SK-N-SH (cell line): ENCODE measurements at regions of chr17 and their contacts with region 1.

Region 1: DNA sequence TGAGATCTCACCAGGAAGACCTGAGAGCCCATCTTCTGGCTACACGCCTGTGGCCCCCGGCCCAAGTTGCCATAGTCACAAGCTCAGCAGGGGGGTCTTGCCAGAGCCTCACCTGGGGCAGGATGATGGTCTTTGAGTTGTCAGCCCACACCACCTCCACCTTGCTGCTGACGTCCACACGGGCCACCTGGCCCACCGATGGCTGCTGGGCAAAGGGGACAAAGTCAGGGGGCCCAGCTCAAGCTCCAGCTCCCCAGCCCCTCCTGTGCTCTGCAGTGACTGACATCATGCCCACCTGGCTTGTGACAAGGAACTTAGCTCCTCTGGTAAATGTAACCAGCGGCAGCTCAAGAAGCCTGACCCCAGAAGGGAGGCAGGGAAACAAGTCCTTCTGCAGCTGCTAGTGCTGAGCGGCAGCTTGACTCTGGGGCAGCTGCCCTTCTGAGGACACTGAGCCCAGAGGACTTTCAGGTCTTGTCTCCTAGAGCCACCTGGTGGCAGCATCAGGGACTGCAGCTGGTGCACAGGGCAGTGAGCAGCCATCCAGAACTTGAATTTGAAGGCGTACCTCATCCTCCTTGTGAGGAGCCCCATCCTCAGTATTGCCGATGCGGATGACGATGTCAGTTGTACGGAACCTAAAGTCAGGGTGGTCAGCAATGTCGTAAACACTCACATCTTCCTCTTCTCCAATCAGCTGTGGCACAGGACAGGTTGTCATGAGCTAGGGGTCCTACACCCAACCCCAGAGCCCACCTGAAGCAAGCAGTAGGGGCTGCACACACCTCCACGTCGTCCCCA is 13.5 kb downstream of the SPHK1 start:
- DNase-seq: peak; percentile 92
- H3K4me3 ChIP-seq: no peak overlapping the region; a peak in 1 of 4 replicates
- H3K27ac ChIP-seq: no peak overlapping the region; a peak in 1 of 4 replicates
- H3K4me1 ChIP-seq: peaks cover 0 to 3% of the 10 kb centered on the region in 2 experiments; a peak in 1 of 4 replicates
- H3K27me3 ChIP-seq: no peaks in the 10 kb centered on the region
- CTCF ChIP-seq: peak; percentile 99
- EP300 ChIP-seq: no peak
- RAD21 ChIP-seq: peak; percentile 96

Region 2: GRCh38 chr17:76296186-76296585 is 101.7 kb before region 1 on chr17:
- CTCF ChIA-PET with region 1: interaction called, 348 read pairs
- POLR2A ChIA-PET with region 1: no interaction called
- DNase-seq: no peak
- H3K4me3 ChIP-seq: no peak overlapping the region
- H3K27ac ChIP-seq: no peak overlapping the region
- H3K4me1 ChIP-seq: no peaks in the 10 kb centered on the region
- H3K27me3 ChIP-seq: no peaks in the 10 kb centered on the region
- CTCF ChIP-seq: no peak
- EP300 ChIP-seq: no peak
- RAD21 ChIP-seq: no peak

Region 3: DNA sequence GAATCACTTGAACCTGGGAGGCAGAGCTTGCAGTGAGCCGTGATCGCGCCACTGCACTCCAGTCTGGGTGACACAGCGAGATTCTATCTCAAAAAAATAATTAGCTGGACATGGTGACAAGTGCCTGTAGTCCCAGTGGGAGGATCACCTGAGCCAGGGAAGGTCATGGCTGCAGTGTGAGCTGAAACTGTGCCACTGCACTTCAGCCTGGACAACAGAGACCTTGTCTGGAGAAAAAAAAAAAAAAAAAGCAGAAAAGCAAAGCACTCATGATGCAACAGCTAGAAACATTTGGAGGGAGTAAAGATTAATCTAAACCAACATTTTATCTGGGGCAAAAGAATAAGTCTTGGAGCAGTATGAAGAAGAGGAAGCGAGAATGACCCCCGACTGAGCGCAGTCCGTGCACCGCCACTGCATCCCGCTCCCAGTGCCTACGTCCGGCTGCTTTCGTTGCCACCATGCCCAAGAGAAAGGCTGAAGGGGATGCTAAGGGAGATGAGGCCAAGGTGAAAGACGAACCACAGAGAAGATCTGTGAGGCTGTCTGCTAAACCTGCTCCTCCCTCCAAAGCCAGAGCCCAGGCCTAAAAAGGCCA is 52.4 kb before region 1 on chr17:
- CTCF ChIA-PET with region 1: interaction called, 12 read pairs
- POLR2A ChIA-PET with region 1: no interaction called
- DNase-seq: no peak
- H3K4me3 ChIP-seq: no peak overlapping the region
- H3K27ac ChIP-seq: peak overlapping the region in 1 of 2 experiments; percentile 17; a peak in 1 of 4 replicates
- H3K4me1 ChIP-seq: no peaks in the 10 kb centered on the region
- H3K27me3 ChIP-seq: no peaks in the 10 kb centered on the region
- CTCF ChIP-seq: no peak
- EP300 ChIP-seq: no peak
- RAD21 ChIP-seq: no peak

Region 4: DNA sequence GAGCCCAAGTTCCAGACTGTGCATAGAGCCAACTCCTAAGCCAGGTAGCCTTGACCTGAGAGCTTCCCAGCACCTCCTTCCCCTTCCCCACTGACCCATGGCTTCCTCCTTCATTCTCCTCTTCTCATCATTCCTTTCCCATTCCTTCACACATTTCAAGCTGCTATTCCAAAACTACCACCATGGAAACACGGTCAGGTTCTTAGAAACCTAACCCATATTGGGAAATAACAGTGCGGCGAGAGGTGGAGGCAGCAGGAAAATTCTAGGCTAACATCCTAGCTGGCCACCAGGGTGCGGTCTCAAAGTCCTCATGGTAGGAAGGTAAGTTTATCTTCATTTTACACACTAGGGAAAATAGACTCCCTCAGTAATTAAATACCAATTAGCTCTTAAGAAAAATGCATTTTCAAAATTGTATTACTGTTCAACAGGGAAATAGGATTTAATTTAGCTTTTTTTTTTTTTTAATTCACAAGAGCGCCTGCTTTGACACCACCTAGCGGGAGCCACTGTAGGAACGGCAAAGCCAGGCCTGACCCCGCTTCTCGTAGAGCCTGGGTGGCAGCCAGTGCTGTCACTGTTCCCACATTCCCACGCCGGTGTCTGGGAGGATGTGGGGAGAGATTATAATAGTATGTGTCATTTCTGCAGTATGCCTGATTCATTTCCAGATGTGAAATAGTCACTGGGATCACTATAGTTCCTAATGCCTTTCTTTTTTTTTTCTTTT is 27.5 kb before region 1 on chr17:
- CTCF ChIA-PET with region 1: interaction called, 18 read pairs
- POLR2A ChIA-PET with region 1: no interaction called
- DNase-seq: peak; percentile 65
- H3K4me3 ChIP-seq: no peak overlapping the region
- H3K27ac ChIP-seq: peak overlapping the region in 1 of 2 experiments; percentile 87; a peak in 2 of 4 replicates
- H3K4me1 ChIP-seq: peaks cover 7 to 24% of the 10 kb centered on the region in 2 experiments; a peak in 2 of 4 replicates
- H3K27me3 ChIP-seq: no peaks in the 10 kb centered on the region
- CTCF ChIP-seq: peak; percentile 93
- EP300 ChIP-seq: peak in 1 of 2 experiments; percentile 73; a peak in 1 of 4 replicates
- RAD21 ChIP-seq: no peak; the same call in 1 of the 2 replicates

Region 5: DNA sequence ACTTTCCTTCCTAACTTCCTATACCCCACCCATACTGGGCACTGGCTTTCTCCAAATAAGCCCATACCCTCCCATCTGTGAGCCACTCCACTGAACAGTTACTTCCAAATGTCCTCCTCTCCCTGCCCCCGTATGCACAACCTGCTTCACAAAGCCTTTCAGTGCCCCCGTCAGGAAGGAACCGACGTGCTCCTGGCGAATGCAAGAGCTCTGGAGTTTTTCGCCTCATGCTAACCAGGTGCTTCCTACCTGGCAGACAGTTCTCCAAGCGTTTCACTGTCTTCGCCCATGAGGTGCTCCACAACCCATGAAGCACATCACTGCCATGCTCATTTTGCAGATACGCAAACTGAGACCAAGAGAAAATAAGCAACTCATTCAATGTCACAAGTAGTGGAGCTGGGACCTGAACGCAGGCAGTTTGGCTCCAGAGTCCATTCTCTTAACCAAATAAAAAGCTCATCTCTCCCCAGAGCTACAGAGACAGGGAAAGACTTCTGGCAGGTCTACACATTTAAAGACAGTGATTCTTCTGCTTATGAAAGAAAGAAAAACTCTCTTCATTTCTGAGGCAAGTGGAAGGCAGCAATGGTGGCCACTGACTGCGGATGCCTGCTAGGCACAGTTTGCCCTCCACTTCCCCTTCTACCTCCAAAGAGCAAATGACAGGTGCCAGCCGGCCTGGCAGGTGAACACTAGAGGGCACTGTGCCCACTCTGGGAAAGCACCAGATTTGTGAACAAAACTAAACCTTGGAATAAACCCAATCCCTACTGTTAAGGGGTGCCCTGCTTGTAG is 10.4 kb after region 1 on chr17:
- CTCF ChIA-PET with region 1: interaction called, 70 read pairs
- POLR2A ChIA-PET with region 1: no interaction called
- DNase-seq: peak; percentile 82
- H3K4me3 ChIP-seq: no peak overlapping the region; a peak in 1 of 4 replicates
- H3K27ac ChIP-seq: no peak overlapping the region
- H3K4me1 ChIP-seq: peaks cover 0 to 16% of the 10 kb centered on the region in 2 experiments; a peak in 2 of 4 replicates
- H3K27me3 ChIP-seq: no peaks in the 10 kb centered on the region
- CTCF ChIP-seq: peak; percentile 99
- EP300 ChIP-seq: no peak
- RAD21 ChIP-seq: peak; percentile 92

Region 6: DNA sequence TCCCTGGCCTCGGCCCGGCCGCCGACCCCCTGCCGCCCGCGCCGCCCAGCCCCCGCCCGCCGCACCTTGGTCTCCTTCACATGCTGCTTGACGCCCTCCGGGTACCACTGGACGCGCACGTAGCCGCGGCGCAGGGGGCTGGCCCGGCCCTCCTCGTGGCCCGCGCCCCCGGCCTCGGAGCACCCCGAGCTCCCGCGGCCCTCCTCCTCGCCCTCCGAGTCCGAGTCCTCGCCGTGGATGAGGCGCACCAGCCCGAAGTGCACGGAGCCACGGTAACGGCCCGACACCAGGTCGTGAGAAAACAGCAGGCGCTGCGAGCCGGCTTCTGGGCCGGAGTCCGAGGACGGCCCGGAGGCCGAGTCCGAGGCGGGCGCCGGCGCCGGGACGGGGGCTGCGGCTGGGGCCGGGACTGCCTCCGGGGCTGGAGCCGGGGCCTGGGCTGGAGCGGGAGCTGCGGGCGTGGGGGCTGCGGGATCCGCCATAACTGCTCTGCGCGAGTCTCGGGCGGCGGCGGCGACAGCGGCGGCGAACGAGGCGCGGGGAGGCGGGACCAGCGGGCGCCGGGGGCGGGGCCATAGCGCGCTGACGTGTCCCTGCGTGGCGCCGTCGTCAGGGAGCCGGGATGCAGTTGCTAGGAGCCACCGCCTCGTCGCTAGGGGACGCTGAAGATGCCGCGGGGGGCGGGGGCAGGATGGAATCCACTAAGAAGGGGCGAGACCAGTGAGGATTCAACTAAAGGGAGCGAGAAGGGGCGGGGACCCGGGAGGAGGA is 55.0 kb after region 1 on chr17 and contains the start of gene UBE2O:
- CTCF ChIA-PET with region 1: interaction called, 41 read pairs
- POLR2A ChIA-PET with region 1: no interaction called
- DNase-seq: peak; percentile 100
- H3K4me3 ChIP-seq: peak within 1 kb of the TSS; percentile 74 to 95
- H3K27ac ChIP-seq: peak within 1 kb of the TSS; percentile 41 to 70
- H3K4me1 ChIP-seq: peaks cover 14 to 21% of the 10 kb centered on the region in 2 experiments
- H3K27me3 ChIP-seq: no peaks in the 10 kb centered on the region
- CTCF ChIP-seq: peak; percentile 64
- EP300 ChIP-seq: no peak; a peak in 1 of 4 replicates
- RAD21 ChIP-seq: no peak
- polyA plus RNA-seq, gene UBE2O: 20.0 and 25.4 TPM in 2 replicates

Region 7: DNA sequence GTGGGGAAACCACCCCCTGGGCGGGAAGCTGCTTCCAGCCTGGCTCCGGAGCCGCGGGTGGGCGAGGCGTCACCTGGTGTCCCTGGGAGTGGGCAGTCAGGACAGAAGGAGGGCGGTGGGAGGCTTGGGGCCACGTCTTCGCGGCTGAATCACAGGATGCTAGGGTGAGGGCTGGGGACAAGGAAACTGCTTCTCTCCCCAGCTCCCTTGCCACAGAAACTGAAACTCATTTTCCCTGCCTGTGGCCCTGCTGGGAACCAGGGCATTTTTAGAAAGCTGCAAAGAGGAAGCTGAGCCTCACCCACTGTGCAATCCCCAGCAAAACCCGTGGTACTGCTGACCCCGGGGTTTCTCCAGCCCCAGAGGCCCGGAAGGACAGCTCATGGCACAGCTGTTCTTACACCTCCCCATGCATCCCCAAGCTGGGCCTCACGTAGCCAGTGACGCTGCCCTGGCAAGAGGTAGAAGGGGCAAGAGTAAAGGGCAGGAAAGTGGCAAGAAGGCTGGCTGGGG is 95.2 kb after region 1 on chr17:
- CTCF ChIA-PET with region 1: interaction called, 32 read pairs
- POLR2A ChIA-PET with region 1: no interaction called
- DNase-seq: no peak
- H3K4me3 ChIP-seq: no peak overlapping the region
- H3K27ac ChIP-seq: no peak overlapping the region
- H3K4me1 ChIP-seq: peaks cover 13 to 55% of the 10 kb centered on the region in 2 experiments; a peak in 3 of 4 replicates
- H3K27me3 ChIP-seq: no peaks in the 10 kb centered on the region
- CTCF ChIP-seq: no peak
- EP300 ChIP-seq: no peak
- RAD21 ChIP-seq: no peak